HEK293T (cell line): ENCODE measurements at regions of chr15 and their contacts with region 1.

Region 1: GRCh38 chr15:43824302-43825246 is at the start of gene MFAP1:
- DNase-seq: peak; percentile 83

Region 2: DNA sequence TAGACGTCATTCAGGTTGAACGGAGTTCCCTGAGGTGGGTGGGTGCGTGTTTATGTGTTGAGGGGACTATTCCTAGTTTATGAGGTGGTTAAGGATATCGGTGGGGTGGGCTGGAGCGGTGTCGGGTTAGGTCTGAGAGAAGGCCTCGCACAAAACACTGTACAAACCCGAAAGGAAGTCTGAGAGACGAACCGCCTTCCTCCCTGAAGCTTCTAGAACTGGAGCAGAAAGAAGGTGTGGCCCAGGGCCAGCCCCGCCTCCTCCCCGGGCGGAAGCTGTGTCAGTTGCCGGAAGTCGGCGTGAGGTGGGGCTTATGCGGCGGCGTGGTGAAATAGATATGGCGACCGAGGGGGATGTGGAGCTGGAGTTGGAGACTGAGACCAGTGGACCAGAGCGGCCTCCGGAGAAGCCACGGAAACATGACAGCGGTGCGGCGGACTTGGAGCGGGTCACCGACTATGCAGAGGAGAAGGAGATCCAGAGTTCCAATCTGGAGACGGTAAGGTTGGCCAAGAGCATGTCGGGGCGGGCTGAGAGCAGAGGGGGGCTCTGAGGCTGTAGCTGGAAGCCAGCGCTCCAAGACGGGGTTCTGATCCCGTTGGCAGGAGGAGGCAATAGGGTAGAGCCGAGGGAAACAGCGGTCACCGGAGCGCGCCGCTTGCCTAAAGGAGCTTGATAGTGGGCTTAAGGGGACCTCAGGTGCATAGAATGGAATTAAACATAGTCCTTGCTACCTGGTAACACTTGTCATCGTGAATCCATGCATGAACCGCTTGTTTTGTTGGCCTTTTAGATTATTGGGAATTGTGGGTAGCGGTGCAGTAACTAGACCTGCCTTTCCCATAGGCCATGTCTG is 24.1 kb before region 1 on chr15 and contains the start of gene HYPK:
- CTCF ChIA-PET with region 1: no interaction called
- POLR2A ChIA-PET with region 1: interaction called, 25 read pairs
- DNase-seq: peak; percentile 70